Breast epithelium (tissue), 4 donors: ENCODE measurements at regions of chr18 and their contacts with region 1.

Region 1: DNA sequence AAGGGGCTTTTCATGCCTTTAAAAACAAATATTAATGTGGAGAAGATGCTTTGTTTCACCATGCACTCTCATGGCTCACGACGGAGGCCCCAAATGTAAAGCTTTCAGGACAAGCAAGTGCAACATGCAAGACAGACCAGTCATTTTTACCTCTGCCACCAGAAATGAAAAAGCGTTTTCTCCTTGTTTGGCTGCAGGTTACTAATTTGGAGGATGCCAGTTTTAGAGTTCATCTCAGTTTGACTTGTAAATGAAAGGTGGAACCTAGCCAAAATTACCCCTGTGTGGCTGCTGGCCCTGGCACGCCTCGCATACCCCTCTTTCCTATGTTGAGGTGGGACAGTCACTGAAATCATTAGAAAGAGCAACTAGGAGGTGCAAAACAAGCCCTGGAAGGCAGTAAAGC is 138.6 kb downstream of the BCL2 start:
- DNase-seq: no peak
- H3K4me3 ChIP-seq: no peak overlapping the region
- H3K27ac ChIP-seq: peak overlapping the region; percentile 24 to 77
- H3K4me1 ChIP-seq: peaks cover 18 to 27% of the 10 kb centered on the region in 2 donors
- H3K27me3 ChIP-seq: no peaks in the 10 kb centered on the region
- CTCF ChIP-seq: no peak
- POLR2A ChIP-seq: no peak

Region 2: DNA sequence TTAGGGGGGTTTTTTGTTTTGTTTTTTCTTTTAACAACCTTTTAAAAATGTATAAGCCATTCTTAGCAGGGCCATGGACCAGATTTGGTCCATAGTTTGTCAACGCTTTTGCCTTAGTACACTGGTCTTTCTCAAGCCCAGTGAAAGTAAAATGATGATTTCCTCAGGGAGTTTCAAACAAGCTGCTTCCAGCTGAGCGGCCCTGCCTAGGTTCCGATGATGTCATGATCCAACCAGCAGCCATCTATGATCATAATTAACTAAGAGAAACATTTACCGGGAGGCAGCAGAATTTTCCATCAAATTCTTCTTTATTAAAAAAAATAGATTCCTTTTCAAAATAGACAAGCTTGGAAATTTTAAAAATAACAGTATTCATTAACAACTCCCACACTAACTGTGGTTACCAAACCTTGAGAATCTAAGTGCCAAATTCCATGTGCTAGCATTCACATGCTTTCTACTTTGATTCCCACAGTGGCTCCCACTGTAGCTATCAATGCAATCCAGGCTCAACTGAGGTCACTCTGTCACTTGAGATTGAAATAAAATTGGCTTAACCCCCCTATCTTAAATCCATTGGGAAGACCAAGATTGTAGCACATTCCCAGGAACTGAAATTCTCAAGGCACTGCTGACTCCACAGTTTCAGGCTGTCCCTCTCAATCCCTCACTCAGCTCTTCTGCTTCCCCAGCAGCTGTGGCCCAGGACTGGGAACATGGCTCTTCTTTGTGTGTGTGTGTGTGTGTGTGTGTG is 1437.0 kb before region 1 on chr18:
- intact Hi-C with region 1: loop called (anchors 5 kb)
- DNase-seq: no peak
- H3K4me3 ChIP-seq: no peak overlapping the region
- H3K27ac ChIP-seq: peak overlapping the region; percentile 20 to 26
- H3K4me1 ChIP-seq: no peaks in the 10 kb centered on the region
- H3K27me3 ChIP-seq: no peaks in the 10 kb centered on the region
- CTCF ChIP-seq: no peak
- POLR2A ChIP-seq: no peak

Region 3: GRCh38 chr18:63150942-63151421 is 30.0 kb before region 1 on chr18:
- intact Hi-C with region 1: loop called (anchors 1 kb)
- DNase-seq: no peak
- H3K4me3 ChIP-seq: no peak overlapping the region
- H3K27ac ChIP-seq: no peak overlapping the region
- H3K4me1 ChIP-seq: peaks cover 0 to 26% of the 10 kb centered on the region in 2 donors
- H3K27me3 ChIP-seq: no peaks in the 10 kb centered on the region
- CTCF ChIP-seq: no peak
- POLR2A ChIP-seq: no peak